ENCODE measurements at regions of chr5 and their contacts with region 1.

Region 1: DNA sequence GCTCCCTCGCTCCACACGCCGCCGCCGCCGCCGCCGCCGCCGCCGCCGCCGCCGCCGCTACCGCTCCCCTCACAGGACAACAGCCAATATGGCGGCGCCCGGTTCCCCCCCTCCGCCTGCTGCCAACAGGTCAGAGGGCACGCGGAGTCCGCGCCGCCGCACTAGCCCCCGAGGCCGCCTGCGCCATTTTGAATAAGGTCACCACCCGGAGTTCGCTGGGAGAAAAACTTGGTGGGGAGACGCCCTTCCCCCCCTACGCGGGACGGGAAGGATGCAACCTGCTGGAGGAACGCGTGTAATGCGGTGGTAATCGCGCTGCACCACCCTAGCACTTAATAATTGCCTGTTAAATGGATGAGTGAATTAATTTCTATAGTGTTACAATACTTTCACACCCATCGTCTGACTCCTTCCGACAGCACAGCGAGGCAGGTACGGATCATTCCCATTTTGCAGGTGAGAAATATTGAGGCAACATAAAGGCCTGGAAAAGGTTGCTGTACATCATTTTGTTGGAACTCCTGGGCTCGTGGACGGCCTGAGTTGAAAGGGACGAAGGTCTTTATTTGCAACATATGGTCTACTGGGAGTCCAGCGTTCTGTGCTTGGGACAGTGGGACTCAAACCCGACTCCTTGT is at the start of gene FAM193B:
- DNase-seq: peak; percentile 95
- ATAC-seq: peak; percentile 99
- H3K4me3 ChIP-seq: peak within 1 kb of the TSS; percentile 61 to 84 (median 77)
- H3K4me3 Mint-ChIP-seq: peak within 1 kb of the TSS; percentile 93
- H3K27ac ChIP-seq: peak within 1 kb of the TSS; percentile 36 to 66
- H3K27ac Mint-ChIP-seq: peak within 1 kb of the TSS; percentile 84
- H3K4me1 ChIP-seq: peaks cover 18 to 26% of the 10 kb centered on the region in 2 donors
- H3K4me1 Mint-ChIP-seq: peaks cover 30% of the 10 kb centered on the region
- H3K27me3 ChIP-seq: no peaks in the 10 kb centered on the region
- H3K27me3 Mint-ChIP-seq: no peaks in the 10 kb centered on the region
- CTCF ChIP-seq: no peak
- total RNA-seq, gene FAM193B: 227 and 237 TPM in 2 replicates

Region 2: DNA sequence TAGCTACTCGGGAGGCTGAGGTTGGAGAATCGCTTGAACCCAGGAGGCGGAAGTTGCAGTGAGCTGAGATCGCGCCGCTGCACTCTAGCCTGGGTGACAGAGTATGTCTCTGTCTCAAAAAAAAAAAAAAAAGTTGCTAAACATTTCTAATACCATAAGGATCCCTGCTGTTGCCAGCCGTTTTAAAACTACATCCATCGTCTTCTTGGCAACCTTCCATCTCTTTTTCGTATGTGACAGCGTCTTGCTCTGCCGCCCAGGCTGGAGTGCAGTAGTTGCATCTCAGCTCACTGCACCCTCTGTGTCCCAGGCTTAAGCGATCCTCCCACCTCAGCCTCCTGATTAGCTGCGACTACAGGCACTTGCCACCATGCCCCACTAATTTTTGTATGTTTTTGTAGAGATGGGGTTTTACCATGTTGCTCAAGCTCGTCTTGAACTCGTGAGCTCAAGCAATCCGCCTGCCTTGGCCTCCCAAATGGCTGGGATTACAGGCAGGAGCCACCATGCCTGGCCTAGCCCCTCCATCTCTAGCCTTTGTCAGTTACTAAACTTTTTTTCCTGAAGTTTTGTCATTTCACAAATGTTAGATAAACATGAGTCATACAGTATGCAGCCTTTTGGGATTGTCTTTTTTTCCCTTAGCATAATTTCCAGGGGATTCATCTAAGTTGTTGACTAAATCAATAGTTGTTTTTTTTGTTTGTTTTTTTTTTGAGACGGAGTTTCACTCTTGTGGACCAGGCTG is 407.5 kb before region 1 on chr5:
- CTCF ChIA-PET with region 1: no interaction called
- POLR2A ChIA-PET with region 1: no interaction called
- intact Hi-C with region 1: no loop called
- DNase-seq: no peak
- ATAC-seq: no peak
- H3K4me3 ChIP-seq: no peak overlapping the region
- H3K4me3 Mint-ChIP-seq: no peak overlapping the region
- H3K27ac ChIP-seq: no peak overlapping the region
- H3K27ac Mint-ChIP-seq: peak overlapping the region; percentile 3
- H3K4me1 ChIP-seq: peaks cover 3 to 4% of the 10 kb centered on the region in 2 donors
- H3K4me1 Mint-ChIP-seq: peaks cover 11% of the 10 kb centered on the region
- H3K27me3 ChIP-seq: no peaks in the 10 kb centered on the region
- H3K27me3 Mint-ChIP-seq: no peaks in the 10 kb centered on the region
- CTCF ChIP-seq: no peak

Region 3: DNA sequence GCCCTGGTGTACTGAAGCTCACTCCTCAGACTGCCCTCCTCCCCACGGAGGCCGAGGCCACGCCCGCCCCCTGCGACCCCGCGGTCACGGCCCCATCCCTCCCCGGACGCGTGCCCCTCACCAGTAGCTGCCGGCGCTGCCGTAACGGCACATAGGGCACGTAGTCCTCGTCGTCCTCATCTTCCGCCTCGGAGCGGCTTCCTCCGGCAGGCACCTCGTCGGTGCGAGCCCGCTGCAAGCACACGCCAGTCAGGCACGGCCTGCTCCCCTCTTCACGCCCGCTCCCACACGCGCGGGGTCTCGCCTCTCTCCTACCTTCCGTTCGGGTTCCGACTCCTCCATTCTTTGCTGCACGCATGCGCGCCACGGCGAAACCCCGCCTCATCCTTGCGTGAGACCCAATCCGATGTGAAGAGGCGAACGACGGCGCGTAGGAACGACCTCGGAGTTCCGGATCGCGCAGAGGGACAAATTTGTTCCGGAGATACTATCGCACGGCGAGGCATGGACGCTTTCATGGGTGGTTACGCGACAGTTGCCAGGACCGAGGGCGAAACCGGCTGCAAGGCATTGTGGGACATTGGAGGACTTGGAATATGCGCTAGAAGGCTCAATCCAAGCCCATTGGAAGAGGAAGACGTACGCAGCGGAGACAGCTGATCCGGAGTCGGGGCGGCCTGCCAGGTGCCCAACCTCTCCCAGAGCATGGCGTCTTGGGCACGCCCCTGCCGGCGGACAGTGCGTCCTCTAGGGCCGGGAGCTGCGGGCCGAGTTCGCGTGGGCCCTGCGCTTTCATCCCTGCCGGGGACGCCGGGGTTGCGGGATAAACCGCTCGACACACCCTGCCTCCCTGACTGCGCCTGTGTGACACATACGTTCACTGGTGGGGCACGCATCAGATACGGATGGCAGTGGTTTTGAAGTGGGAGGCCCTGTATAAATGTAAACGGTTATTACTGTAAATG is 37.7 kb before region 1 on chr5 and contains the start of gene DDX41:
- CTCF ChIA-PET with region 1: no interaction called
- POLR2A ChIA-PET with region 1: no interaction called
- intact Hi-C with region 1: loop called (anchors 1 kb)
- DNase-seq: peak; percentile 96
- ATAC-seq: peak; percentile 90
- H3K4me3 ChIP-seq: peak within 1 kb of the TSS; percentile 78 to 96 (median 89)
- H3K4me3 Mint-ChIP-seq: peak within 1 kb of the TSS; percentile 91
- H3K27ac ChIP-seq: peak within 1 kb of the TSS; percentile 46 to 70
- H3K27ac Mint-ChIP-seq: peak within 1 kb of the TSS; percentile 93
- H3K4me1 ChIP-seq: peaks cover 7 to 28% of the 10 kb centered on the region in 2 donors
- H3K4me1 Mint-ChIP-seq: peaks cover 47% of the 10 kb centered on the region
- H3K27me3 ChIP-seq: no peaks in the 10 kb centered on the region
- H3K27me3 Mint-ChIP-seq: no peaks in the 10 kb centered on the region
- CTCF ChIP-seq: no peak
- total RNA-seq, gene DDX41: 110 and 111 TPM in 2 replicates

Region 4: DNA sequence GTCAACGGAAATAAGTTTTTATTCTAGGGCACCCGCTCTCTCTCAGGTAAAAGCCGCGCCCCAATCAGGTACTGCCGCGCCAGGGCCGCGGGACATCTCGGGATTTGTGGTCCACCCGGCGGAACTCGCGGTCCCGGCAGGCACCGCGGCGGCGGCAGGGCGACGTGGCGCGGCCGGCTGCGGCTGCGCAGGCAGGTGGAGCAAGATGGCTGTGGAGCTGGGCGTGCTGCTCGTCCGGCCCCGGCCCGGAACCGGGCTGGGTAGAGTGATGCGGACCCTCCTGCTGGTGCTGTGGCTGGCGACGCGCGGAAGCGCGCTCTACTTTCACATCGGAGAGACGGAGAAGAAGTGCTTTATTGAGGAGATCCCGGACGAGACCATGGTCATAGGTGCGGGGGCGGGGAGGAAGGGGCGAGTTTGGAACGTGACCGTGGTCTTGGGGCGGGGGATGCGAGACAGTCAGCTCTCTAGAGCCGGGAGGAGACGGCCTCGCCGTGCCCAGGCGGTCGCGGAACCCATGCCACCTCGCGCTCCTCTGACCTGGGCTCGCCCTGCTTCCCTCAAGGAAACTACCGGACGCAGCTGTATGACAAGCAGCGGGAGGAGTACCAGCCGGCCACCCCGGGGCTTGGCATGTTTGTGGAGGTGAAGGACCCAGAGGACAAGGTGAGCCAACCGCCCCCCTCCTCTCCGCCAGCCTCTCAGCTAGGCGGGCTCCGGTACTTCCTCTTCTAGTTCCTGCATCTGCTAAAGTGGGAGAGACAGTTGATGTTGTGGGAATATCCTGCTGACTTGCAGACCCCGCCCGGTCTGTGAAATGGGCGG is 37.6 kb after region 1 on chr5 and contains the start of gene TMED9:
- CTCF ChIA-PET with region 1: no interaction called
- POLR2A ChIA-PET with region 1: interaction called, 3 read pairs
- intact Hi-C with region 1: loop called (anchors 1 kb)
- DNase-seq: peak; percentile 90
- ATAC-seq: peak; percentile 98
- H3K4me3 ChIP-seq: peak within 1 kb of the TSS; percentile 63 to 91 (median 88)
- H3K4me3 Mint-ChIP-seq: peak within 1 kb of the TSS; percentile 99
- H3K27ac ChIP-seq: peak within 1 kb of the TSS; percentile 62 to 82
- H3K27ac Mint-ChIP-seq: peak within 1 kb of the TSS; percentile 97
- H3K4me1 ChIP-seq: peaks cover 12 to 18% of the 10 kb centered on the region in 2 donors
- H3K4me1 Mint-ChIP-seq: peaks cover 19% of the 10 kb centered on the region
- H3K27me3 ChIP-seq: no peaks in the 10 kb centered on the region
- H3K27me3 Mint-ChIP-seq: peaks cover 5% of the 10 kb centered on the region
- CTCF ChIP-seq: no peak
- total RNA-seq, gene TMED9: 63.1 and 67.6 TPM in 2 replicates

Region 5: DNA sequence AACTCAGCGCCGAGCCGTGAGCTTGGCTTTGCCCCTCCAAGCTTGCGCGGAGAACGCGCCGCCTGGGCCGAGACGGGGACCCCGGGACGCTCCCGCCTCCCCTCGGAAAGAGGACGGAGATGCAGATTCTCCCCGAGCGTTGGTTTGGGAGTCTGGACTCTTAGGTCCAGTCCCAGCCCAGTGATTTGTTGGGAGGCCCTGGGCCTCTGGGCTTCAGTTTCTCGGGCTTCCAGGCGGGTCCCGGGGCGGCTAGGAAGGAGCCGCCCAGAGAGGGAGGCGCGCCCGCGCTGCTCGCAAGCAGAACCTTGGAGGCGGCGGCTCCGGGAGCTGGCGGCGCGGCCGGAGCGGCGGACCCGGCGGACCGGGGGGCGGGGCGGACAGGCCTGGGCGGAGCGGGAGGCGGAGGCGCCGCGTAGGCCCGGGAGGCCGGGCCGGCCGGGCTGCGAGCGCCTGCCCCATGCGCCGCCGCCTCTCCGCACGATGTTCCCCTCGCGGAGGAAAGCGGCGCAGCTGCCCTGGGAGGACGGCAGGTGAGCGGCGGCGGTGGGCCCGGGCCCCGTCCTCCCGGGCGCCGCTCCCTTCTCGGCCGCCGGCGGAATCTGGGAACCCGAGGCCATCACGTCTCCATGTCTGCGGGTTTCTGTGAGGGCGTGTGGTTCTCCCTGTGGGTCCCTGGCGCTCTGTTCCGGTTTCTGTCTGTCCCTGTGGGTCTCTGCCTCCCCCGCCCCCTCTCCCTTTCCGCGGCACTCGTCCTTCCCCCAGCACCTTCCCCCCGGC is 45.3 kb after region 1 on chr5 and contains the start of gene B4GALT7:
- CTCF ChIA-PET with region 1: interaction called, 3 read pairs
- POLR2A ChIA-PET with region 1: no interaction called
- intact Hi-C with region 1: loop called (anchors 2 kb)
- DNase-seq: peak; percentile 88
- ATAC-seq: peak; percentile 88
- H3K4me3 ChIP-seq: peak within 1 kb of the TSS; percentile 61 to 87 (median 81)
- H3K4me3 Mint-ChIP-seq: peak within 1 kb of the TSS; percentile 95
- H3K27ac ChIP-seq: peak within 1 kb of the TSS; percentile 74 to 94
- H3K27ac Mint-ChIP-seq: peak within 1 kb of the TSS; percentile 94
- H3K4me1 ChIP-seq: peaks cover 13 to 27% of the 10 kb centered on the region in 2 donors
- H3K4me1 Mint-ChIP-seq: peaks cover 29% of the 10 kb centered on the region
- H3K27me3 ChIP-seq: no peaks in the 10 kb centered on the region
- H3K27me3 Mint-ChIP-seq: no peaks in the 10 kb centered on the region
- CTCF ChIP-seq: no peak
- total RNA-seq, gene B4GALT7: 38.9 and 41.8 TPM in 2 replicates

Measured in B cell (primary cell).